ENCODE measurements at regions of chr11 and their contacts with region 1.

Region 1: DNA sequence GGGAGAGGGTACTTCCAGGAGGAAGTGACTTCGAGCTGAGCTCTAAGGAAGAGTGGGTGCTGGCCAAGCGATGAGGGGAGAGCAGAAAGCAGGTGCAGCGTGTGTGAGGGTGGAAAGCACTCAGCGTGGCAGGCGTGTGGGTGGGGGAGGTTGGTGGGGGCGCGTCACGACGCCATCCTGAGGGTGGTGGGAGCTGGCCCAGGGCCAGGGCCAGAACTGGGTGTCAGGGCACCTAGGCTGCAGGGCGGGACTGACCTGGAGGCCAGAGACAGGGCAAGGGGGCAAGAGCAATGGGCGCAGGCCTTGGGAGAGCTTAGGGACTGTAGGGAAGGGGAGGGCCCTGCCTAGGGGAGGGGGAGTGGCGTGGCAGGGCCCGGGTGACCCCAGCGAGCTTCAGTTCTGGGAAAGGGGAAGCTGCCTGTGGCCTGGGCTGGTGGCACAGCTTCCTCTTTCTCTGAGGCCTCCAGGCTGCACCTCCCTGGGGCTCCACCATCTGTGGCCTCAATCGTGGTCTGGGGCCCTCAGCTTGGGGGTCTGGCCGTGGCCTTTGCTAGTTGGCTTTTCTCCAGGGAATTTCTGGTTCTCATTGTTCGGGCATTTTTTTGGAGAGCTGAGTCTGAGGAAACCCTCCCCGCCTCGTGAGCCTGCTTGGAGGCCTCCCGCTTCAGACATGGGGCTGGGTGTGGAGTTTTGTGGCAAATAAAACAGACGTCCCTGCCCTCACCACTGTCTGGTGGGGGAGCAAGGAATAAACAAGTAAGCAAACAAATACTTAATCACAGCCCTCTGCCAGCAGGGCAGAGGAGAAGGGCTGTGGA is 8.9 kb downstream of the RELT start:
- DNase-seq: peak; percentile 89
- H3K4me3 ChIP-seq: peak overlapping the region; percentile 52
- H3K27ac ChIP-seq: peak overlapping the region; percentile 79
- H3K4me1 ChIP-seq: peaks cover 99% of the 10 kb centered on the region
- CTCF ChIP-seq: no peak

Region 2: GRCh38 chr11:73157053-73158010 is 227.7 kb before region 1 on chr11:
- CTCF ChIA-PET with region 1: no interaction called
- POLR2A ChIA-PET with region 1: no interaction called
- intact Hi-C with region 1: loop called (anchors 2 kb)
- DNase-seq: peak; percentile 77
- H3K4me3 ChIP-seq: peak overlapping the region; percentile 41
- H3K27ac ChIP-seq: peak overlapping the region; percentile 98
- H3K4me1 ChIP-seq: peaks cover 85% of the 10 kb centered on the region
- CTCF ChIP-seq: no peak

Measured in OCI-LY7 (cell line).